PC-3 (cell line): ENCODE measurements at regions of chr17 and their contacts with region 1.

Region 1: GRCh38 chr17:49556223-49556971 is 19.3 kb upstream of the NXPH3 start:
- DNase-seq: peak; percentile 88
- ATAC-seq: peak; percentile 91
- H3K4me3 ChIP-seq: peak overlapping the region; percentile 27; the same call in 1 of the 2 replicates
- H3K27ac ChIP-seq: no peak overlapping the region
- H3K4me1 ChIP-seq: peaks cover 4% of the 10 kb centered on the region; the same call in 1 of the 2 replicates
- H3K27me3 ChIP-seq: no peaks in the 10 kb centered on the region
- CTCF ChIP-seq: peak; percentile 100

Region 2: GRCh38 chr17:49260011-49260921 is 296.1 kb before region 1 on chr17:
- CTCF ChIA-PET with region 1: interaction called, 13 read pairs
- POLR2A ChIA-PET with region 1: no interaction called
- intact Hi-C with region 1: no loop called
- DNase-seq: peak; percentile 79
- ATAC-seq: peak; percentile 87
- H3K4me3 ChIP-seq: peak overlapping the region; percentile 68
- H3K27ac ChIP-seq: peak overlapping the region; percentile 35
- H3K4me1 ChIP-seq: peaks cover 12% of the 10 kb centered on the region
- H3K27me3 ChIP-seq: no peaks in the 10 kb centered on the region
- CTCF ChIP-seq: no peak

Region 3: GRCh38 chr17:49315551-49316257 is 240.7 kb before region 1 on chr17:
- CTCF ChIA-PET with region 1: no interaction called
- POLR2A ChIA-PET with region 1: no interaction called
- intact Hi-C with region 1: loop called (anchors 1 kb)
- DNase-seq: peak; percentile 98
- ATAC-seq: peak; percentile 96
- H3K4me3 ChIP-seq: peak overlapping the region; percentile 11; the same call in 1 of the 2 replicates
- H3K27ac ChIP-seq: peak overlapping the region; percentile 21
- H3K4me1 ChIP-seq: peaks cover 14% of the 10 kb centered on the region
- H3K27me3 ChIP-seq: no peaks in the 10 kb centered on the region
- CTCF ChIP-seq: peak; percentile 98

Region 4: DNA sequence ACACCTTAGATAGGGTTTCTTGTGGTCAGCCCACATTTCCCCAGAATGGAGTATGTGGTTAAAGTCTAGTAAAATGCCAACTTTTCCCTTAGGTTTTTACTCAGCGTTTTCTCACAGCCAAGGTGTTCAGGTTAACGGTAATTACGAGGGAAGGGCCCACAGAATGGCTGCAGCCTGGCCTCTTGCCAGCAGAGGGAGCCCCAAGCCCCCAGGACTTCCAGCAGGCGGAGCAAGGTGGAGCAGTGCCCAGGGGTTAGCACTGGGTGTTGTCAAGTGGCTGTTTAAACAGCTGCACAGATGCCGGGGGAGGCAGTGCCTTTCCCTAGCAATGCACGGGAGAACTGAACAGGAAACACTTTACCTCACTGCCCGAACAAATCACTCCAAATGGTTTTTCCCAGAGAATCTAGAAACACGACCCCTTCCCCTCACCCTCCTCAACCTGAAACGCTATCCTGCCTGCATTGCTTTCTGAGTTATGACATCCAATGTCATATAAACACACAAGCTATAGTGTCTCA is 148.4 kb before region 1 on chr17:
- CTCF ChIA-PET with region 1: interaction called, 9 read pairs
- POLR2A ChIA-PET with region 1: no interaction called
- intact Hi-C with region 1: loop called (anchors 1 kb)
- DNase-seq: peak; percentile 77
- ATAC-seq: peak; percentile 98
- H3K4me3 ChIP-seq: no peak overlapping the region
- H3K27ac ChIP-seq: no peak overlapping the region
- H3K4me1 ChIP-seq: no peaks in the 10 kb centered on the region
- H3K27me3 ChIP-seq: no peaks in the 10 kb centered on the region
- CTCF ChIP-seq: peak; percentile 98

Region 5: GRCh38 chr17:49434821-49435670 is 121.4 kb before region 1 on chr17:
- CTCF ChIA-PET with region 1: interaction called, 3 read pairs
- POLR2A ChIA-PET with region 1: no interaction called
- intact Hi-C with region 1: loop called (anchors 1 kb)
- DNase-seq: peak; percentile 88
- ATAC-seq: peak; percentile 86
- H3K4me3 ChIP-seq: no peak overlapping the region
- H3K27ac ChIP-seq: no peak overlapping the region
- H3K4me1 ChIP-seq: no peaks in the 10 kb centered on the region
- H3K27me3 ChIP-seq: peaks cover 44% of the 10 kb centered on the region
- CTCF ChIP-seq: peak; percentile 71

Region 6: DNA sequence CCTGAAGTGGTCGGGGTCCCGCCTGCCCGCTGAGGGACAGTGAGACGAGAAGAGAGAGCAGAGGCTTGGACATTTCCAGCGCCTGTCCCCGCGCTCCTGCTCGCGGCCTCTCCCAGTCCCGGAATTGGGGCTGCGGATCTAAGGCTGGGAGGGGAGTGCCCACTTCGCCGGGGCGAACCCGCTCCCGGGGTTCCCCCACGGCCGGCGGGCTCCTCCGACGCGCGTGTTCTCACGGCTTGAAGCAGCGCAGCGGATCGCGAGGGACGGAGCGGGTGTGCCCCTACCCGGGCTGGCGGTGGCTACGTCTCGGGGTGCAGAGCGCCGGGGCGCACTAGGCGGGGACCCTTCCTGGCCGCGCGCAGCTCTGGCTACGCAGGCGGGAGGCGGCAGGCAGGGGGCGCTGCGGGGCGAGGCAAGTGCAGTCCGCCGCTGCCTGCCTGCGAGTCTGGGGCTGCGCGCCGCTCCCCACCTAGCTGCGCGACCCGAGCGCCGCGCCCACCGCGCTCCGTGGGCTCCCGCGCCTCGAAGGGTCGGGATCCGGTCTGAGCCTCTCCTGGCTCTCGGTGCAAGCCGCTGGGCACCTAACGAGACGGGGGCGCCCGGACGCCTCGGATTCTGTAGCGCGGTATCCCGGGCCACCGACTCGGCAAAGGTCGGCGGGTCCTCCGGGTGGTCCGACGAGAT is 60.1 kb before region 1 on chr17:
- CTCF ChIA-PET with region 1: interaction called, 7 read pairs
- POLR2A ChIA-PET with region 1: no interaction called
- intact Hi-C with region 1: loop called (anchors 1 kb)
- DNase-seq: peak; percentile 54
- ATAC-seq: peak; percentile 76
- H3K4me3 ChIP-seq: peak overlapping the region; percentile 52; the same call in 1 of the 2 replicates
- H3K27ac ChIP-seq: no peak overlapping the region
- H3K4me1 ChIP-seq: peaks cover 16% of the 10 kb centered on the region
- H3K27me3 ChIP-seq: peaks cover 68% of the 10 kb centered on the region
- CTCF ChIP-seq: peak; percentile 78

Region 7: GRCh38 chr17:49545007-49545660 is 11.3 kb before region 1 on chr17:
- CTCF ChIA-PET with region 1: no interaction called
- POLR2A ChIA-PET with region 1: no interaction called
- intact Hi-C with region 1: no loop called
- DNase-seq: no peak
- ATAC-seq: no peak
- H3K4me3 ChIP-seq: no peak overlapping the region
- H3K27ac ChIP-seq: no peak overlapping the region
- H3K4me1 ChIP-seq: no peaks in the 10 kb centered on the region
- H3K27me3 ChIP-seq: 0 out of 2 replicates have a peak, but pooled peaks cover 5% of the 10 kb centered on the region
- CTCF ChIP-seq: no peak